ENCODE measurements at regions of chr15 and their contacts with region 1.

Region 1: DNA sequence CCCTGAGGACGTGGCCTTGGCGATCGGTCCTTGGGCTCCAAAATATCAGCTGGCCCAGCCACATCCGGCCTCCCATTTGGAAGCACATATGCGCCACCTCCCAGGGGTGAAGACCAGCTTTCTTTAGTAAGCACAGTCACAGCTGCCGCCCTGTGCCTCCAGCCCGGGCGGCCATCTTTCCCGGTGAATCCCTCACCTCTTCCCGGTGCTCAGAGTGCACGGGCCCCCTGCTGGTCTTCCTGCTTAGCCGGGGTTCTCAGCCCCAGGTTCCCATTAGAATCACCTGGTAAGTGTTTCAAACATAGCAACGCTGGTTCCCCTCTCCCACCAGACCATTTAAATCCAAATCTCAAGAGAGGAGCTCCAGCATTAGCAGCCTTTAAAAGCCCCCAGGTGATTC is 232.2 kb downstream of the VPS13C start:
- DNase-seq: no peak
- H3K4me3 ChIP-seq: no peak overlapping the region
- H3K27ac ChIP-seq: no peak overlapping the region
- H3K4me1 ChIP-seq: no peaks in the 10 kb centered on the region
- H3K27me3 ChIP-seq: no peaks in the 10 kb centered on the region
- CTCF ChIP-seq: no peak
- POLR2A ChIP-seq: no peak

Region 2: DNA sequence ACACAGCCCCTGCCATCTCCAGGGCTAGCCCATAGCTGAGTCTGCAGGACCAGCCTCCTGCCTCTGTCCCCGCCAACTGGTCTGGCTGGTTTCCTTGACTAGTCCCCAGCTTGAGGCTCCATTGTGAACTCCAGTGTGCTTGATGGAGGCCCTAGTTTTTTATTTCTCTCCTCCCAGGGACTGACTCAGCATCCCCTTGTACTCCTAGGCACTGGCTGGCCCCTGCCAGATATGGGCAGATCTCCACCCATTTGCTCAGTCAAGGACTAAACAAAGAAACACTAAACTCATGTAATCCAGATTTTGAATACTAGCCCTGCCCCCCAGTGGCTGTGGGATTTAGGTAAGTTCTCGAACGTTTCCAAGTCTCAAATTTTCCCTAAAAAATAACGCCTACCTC is 183.5 kb before region 1 on chr15:
- intact Hi-C with region 1: loop called (anchors 10 kb)
- DNase-seq: no peak
- H3K4me3 ChIP-seq: no peak overlapping the region
- H3K27ac ChIP-seq: no peak overlapping the region
- H3K4me1 ChIP-seq: peaks cover 0 to 6% of the 10 kb centered on the region in 2 donors
- H3K27me3 ChIP-seq: no peaks in the 10 kb centered on the region
- CTCF ChIP-seq: no peak
- POLR2A ChIP-seq: no peak

Region 3: DNA sequence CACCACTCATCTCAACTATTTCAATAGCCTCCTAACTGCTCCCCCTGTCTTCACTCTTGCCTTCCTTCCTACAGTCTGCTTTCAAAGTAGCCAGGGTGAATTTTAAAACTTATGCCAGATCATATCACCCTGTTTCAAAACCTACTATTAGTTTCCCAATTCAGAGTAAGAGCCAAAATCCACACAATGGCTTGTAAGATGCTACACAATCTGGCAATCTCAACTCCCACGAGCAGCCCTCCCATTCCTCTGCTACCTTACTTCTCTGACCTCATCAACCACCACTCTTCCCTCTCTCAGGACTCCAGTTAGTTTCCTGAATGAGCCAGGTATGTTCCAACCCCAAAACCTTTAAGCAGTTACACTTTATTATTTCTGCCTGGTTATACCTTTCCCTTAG is 169.8 kb after region 1 on chr15:
- intact Hi-C with region 1: no loop called
- DNase-seq: no peak
- H3K4me3 ChIP-seq: no peak overlapping the region
- H3K27ac ChIP-seq: no peak overlapping the region
- H3K4me1 ChIP-seq: no peaks in the 10 kb centered on the region
- H3K27me3 ChIP-seq: no peaks in the 10 kb centered on the region
- CTCF ChIP-seq: no peak
- POLR2A ChIP-seq: no peak

Region 4: DNA sequence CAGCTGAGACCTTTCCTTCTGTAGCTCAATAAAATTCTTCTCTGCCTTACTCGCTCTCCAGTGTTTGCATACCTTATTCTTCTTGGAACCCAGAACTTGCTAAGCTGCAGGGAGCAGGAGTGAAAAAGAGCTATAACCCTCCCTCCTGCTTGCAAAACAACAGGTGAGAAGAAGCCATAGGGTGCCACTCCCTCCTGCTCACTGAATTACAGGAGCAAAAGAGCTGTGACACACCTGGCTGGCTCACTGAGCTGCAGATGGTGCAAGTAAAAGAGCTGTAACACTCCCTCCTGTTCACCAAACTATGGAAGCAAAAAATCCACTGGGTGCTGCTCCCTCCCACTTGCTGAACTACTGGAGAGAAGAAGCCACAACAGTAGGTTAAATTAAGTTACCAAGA is 381.3 kb after region 1 on chr15:
- intact Hi-C with region 1: no loop called
- DNase-seq: no peak
- H3K4me3 ChIP-seq: no peak overlapping the region
- H3K27ac ChIP-seq: no peak overlapping the region
- H3K4me1 ChIP-seq: no peaks in the 10 kb centered on the region
- H3K27me3 ChIP-seq: no peaks in the 10 kb centered on the region
- CTCF ChIP-seq: no peak
- POLR2A ChIP-seq: no peak